ENCODE measurements at regions of chr3 and their contacts with region 1.

Region 1: DNA sequence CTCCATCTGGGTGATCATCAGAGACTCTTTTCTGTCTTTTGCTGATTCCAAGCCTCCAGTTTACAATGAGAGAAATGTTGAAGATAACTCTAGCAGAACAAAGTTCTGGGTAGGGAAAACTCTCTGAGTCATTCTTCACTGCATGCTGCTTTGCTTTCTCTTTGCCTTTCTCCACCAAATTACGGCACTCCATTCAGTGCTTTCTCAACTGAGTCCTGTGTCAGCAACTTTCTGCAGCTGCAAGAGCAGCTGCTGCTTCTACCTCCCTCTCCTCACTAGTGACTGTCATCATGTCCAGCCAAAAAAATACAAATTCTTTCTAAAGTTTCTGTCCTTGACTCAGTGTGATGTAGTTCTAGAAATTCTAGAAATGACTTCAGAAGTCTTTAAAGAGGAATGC is 953.8 kb downstream of the IGSF11 start:
- DNase-seq: no peak
- H3K4me3 ChIP-seq: no peak overlapping the region
- H3K27ac ChIP-seq: no peak overlapping the region
- H3K4me1 ChIP-seq: no peaks in the 10 kb centered on the region
- H3K27me3 ChIP-seq: no peaks in the 10 kb centered on the region
- CTCF ChIP-seq: no peak

Region 2: DNA sequence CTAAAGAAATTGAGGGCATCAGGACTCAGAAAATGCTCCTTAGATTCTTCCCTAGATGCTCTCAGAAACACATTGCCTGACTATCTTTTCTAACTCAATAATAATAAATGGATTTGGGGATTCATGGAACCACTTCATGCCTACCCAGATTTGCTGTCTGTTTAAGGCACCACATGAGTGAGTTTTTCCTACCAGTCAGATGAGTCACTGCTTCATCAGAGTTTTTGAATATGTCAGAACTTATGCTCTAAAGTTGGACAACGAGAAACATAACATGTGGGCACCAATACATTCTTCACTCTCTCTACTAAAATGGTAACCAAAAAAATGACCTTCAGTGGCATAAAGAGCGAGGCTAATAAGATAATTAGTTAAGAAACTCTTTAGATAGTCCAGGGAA is 236.2 kb before region 1 on chr3:
- CTCF ChIA-PET with region 1: no interaction called
- dilution Hi-C with region 1: no loop called
- in situ Hi-C with region 1: no loop called
- intact Hi-C with region 1: no loop called
- DNase-seq: no peak
- H3K4me3 ChIP-seq: no peak overlapping the region
- H3K27ac ChIP-seq: no peak overlapping the region
- H3K4me1 ChIP-seq: no peaks in the 10 kb centered on the region
- H3K27me3 ChIP-seq: peaks cover 2% of the 10 kb centered on the region
- CTCF ChIP-seq: no peak

Region 3: GRCh38 chr3:118171236-118171852 is 90.5 kb after region 1 on chr3:
- CTCF ChIA-PET with region 1: no interaction called
- dilution Hi-C with region 1: no loop called
- in situ Hi-C with region 1: no loop called
- intact Hi-C with region 1: no loop called
- DNase-seq: no peak
- H3K4me3 ChIP-seq: no peak overlapping the region
- H3K27ac ChIP-seq: no peak overlapping the region
- H3K4me1 ChIP-seq: no peaks in the 10 kb centered on the region
- H3K27me3 ChIP-seq: no peaks in the 10 kb centered on the region
- CTCF ChIP-seq: no peak

Region 4: DNA sequence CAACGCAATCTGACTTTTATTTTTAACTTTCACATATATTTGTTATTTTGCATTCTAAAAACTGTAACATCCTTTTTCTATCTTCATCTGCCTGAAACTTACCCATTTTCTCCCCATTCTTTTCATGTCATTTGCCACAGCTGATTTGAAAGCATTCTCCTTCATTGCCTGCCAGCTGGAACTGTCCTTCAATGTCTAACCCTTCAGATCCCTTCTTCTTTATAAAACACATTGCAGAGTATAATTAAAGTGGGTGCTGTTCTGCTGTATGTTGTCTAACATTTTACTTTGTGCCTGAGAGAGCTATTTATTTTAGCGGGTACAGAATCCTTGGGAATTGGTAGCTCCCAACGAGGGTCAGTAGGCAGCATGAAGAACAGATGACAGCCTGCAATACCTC is 126.4 kb after region 1 on chr3:
- CTCF ChIA-PET with region 1: no interaction called
- dilution Hi-C with region 1: no loop called
- in situ Hi-C with region 1: no loop called
- intact Hi-C with region 1: loop called (anchors 10 kb)
- DNase-seq: no peak
- H3K4me3 ChIP-seq: no peak overlapping the region
- H3K27ac ChIP-seq: no peak overlapping the region
- H3K4me1 ChIP-seq: no peaks in the 10 kb centered on the region
- H3K27me3 ChIP-seq: no peaks in the 10 kb centered on the region
- CTCF ChIP-seq: no peak